CD8-positive, alpha-beta T cell (primary cell): ENCODE measurements at regions of chr10 and their contacts with region 1.

Region 1: DNA sequence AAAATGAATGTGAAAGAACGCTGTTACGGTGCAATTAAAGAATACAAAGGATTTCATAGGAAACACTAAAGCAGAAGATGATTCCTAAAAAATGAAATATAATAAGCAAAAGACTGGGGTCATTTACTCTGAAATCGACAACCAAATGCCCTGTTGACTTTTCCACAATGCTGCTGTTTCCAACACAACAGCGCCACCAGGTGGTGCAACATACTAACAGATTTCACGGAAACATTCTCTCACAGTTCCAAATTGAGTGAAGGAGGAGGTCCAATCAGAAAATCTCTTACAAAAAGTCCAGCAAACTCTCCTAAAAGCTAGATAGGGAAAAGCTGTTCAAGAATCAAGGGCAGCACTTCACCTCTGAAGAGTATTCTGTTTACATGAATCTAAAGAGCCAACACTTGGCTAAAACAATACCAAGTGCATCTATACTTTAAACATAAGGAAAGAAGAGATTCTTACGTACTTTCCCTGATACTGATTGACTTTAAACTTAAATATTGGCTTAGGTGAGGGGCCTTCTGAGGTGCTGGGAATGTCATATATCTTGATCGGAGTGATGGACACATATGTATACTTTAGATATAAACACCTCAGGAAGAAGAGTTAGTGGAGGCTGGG is 55.9 kb downstream of the UPF2 start:
- DNase-seq: peak; percentile 45 to 79 (median 68)
- ATAC-seq: peak; percentile 58
- H3K4me3 ChIP-seq: no peak overlapping the region
- H3K4me3 Mint-ChIP-seq: no peak overlapping the region
- H3K27ac ChIP-seq: no peak overlapping the region
- H3K27ac Mint-ChIP-seq: no peak overlapping the region
- H3K4me1 ChIP-seq: no peaks in the 10 kb centered on the region
- H3K4me1 Mint-ChIP-seq: peaks cover 6% of the 10 kb centered on the region
- H3K27me3 ChIP-seq: no peaks in the 10 kb centered on the region
- H3K27me3 Mint-ChIP-seq: no peaks in the 10 kb centered on the region
- CTCF ChIP-seq: peak; percentile 97

Region 2: GRCh38 chr10:11515596-11516430 is 470.9 kb before region 1 on chr10:
- CTCF ChIA-PET with region 1: no interaction called
- POLR2A ChIA-PET with region 1: no interaction called
- intact Hi-C with region 1: loop called (anchors 2 to 5 kb)
- DNase-seq: peak in 7 of 9 experiments; percentile 3 to 77 (median 45)
- ATAC-seq: peak; percentile 85
- H3K4me3 ChIP-seq: no peak overlapping the region
- H3K4me3 Mint-ChIP-seq: no peak overlapping the region
- H3K27ac ChIP-seq: no peak overlapping the region
- H3K27ac Mint-ChIP-seq: no peak overlapping the region
- H3K4me1 ChIP-seq: peaks cover 6% of the 10 kb centered on the region
- H3K4me1 Mint-ChIP-seq: peaks cover 4% of the 10 kb centered on the region
- H3K27me3 ChIP-seq: no peaks in the 10 kb centered on the region
- H3K27me3 Mint-ChIP-seq: no peaks in the 10 kb centered on the region
- CTCF ChIP-seq: peak; percentile 67

Region 3: GRCh38 chr10:11782793-11783557 is 203.7 kb before region 1 on chr10:
- CTCF ChIA-PET with region 1: interaction called, 38 read pairs
- POLR2A ChIA-PET with region 1: no interaction called
- intact Hi-C with region 1: loop called (anchors 1 kb)
- DNase-seq: peak in 2 of 9 experiments; percentile 50 to 62
- ATAC-seq: peak; percentile 71
- H3K4me3 ChIP-seq: no peak overlapping the region
- H3K4me3 Mint-ChIP-seq: no peak overlapping the region
- H3K27ac ChIP-seq: no peak overlapping the region
- H3K27ac Mint-ChIP-seq: no peak overlapping the region
- H3K4me1 ChIP-seq: no peaks in the 10 kb centered on the region
- H3K4me1 Mint-ChIP-seq: no peaks in the 10 kb centered on the region
- H3K27me3 ChIP-seq: no peaks in the 10 kb centered on the region
- H3K27me3 Mint-ChIP-seq: peaks cover 11% of the 10 kb centered on the region
- CTCF ChIP-seq: peak; percentile 63

Region 4: DNA sequence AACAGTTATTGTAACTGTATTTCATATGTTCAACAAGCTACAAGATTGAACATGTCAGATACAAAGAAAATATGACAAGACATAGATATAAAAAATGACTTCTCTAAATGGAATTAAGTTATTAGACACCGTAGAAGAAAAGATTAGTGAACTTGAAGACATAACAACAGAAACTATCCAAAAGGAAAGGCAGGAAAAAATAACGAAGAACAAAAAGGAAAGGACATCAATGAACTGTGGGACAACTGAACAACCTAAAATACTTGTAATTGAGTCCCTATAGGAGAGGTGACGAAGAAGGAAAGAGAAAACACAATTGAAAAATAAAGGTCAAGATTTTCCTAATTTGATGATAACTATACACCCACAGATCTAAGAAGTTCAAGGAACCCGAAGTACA is 23.6 kb after region 1 on chr10:
- CTCF ChIA-PET with region 1: interaction called, 10 read pairs
- POLR2A ChIA-PET with region 1: no interaction called
- intact Hi-C with region 1: no loop called
- DNase-seq: no peak
- ATAC-seq: no peak
- H3K4me3 ChIP-seq: no peak overlapping the region
- H3K4me3 Mint-ChIP-seq: no peak overlapping the region
- H3K27ac ChIP-seq: no peak overlapping the region
- H3K27ac Mint-ChIP-seq: no peak overlapping the region
- H3K4me1 ChIP-seq: no peaks in the 10 kb centered on the region
- H3K4me1 Mint-ChIP-seq: peaks cover 6% of the 10 kb centered on the region
- H3K27me3 ChIP-seq: no peaks in the 10 kb centered on the region
- H3K27me3 Mint-ChIP-seq: no peaks in the 10 kb centered on the region
- CTCF ChIP-seq: no peak

Region 5: DNA sequence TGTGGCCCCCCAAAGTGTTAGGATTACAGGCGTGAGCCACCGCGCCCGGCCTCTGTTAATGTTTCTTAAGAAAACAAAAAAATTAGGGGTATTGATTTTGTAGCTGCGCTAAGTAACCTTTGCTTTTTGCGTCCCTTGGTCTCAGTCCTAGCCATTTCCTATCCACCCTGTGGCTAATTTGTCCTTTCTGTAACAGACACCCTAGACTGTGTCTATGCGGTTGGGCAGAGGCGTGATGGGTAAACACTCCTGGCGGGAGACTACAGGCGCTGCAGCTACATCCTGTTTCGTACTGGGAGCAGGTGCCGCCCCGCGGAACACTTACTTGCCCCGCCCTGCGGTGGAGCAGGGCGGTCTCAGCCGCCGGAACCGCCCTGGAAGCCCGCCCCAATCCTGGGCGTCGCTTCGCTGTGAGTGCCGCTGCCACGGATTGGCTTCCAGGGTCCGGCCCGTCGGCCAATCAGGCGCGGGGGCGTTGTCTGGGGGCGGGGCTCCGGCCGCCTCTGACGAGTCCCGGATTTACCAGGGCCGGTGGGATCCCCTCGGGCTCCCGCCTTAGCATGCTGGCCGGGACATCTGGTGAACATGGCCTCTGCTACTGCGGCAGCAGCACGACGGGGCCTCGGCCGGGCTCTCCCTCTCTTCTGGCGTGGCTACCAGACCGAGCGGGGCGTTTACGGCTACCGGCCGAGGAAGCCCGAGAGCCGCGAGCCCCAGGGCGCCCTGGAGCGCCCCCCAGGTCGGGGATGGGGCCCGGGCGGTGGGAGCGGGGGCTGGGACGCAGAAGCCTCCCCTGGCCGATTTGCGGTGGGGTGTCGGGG is 82.0 kb after region 1 on chr10 and contains the start of gene DHTKD1:
- CTCF ChIA-PET with region 1: interaction called, 3 read pairs
- POLR2A ChIA-PET with region 1: no interaction called
- intact Hi-C with region 1: loop called in 1 of 2 experiments (anchors 1 kb)
- DNase-seq: peak; percentile 97 to 99 (median 98)
- ATAC-seq: peak; percentile 98
- H3K4me3 ChIP-seq: peak within 1 kb of the TSS; percentile 82 to 89
- H3K4me3 Mint-ChIP-seq: peak within 1 kb of the TSS; percentile 88
- H3K27ac ChIP-seq: peak within 1 kb of the TSS; percentile 66 to 75
- H3K27ac Mint-ChIP-seq: peak within 1 kb of the TSS; percentile 96
- H3K4me1 ChIP-seq: peaks cover 7% of the 10 kb centered on the region
- H3K4me1 Mint-ChIP-seq: peaks cover 19% of the 10 kb centered on the region
- H3K27me3 ChIP-seq: no peaks in the 10 kb centered on the region
- H3K27me3 Mint-ChIP-seq: no peaks in the 10 kb centered on the region
- CTCF ChIP-seq: peak; percentile 31
- total RNA-seq, gene DHTKD1: 6.6 TPM

Region 6: GRCh38 chr10:12540341-12540781 is 553.7 kb after region 1 on chr10:
- CTCF ChIA-PET with region 1: no interaction called
- POLR2A ChIA-PET with region 1: no interaction called
- intact Hi-C with region 1: no loop called
- DNase-seq: no peak
- ATAC-seq: no peak
- H3K4me3 ChIP-seq: no peak overlapping the region
- H3K4me3 Mint-ChIP-seq: no peak overlapping the region
- H3K27ac ChIP-seq: no peak overlapping the region
- H3K27ac Mint-ChIP-seq: no peak overlapping the region
- H3K4me1 ChIP-seq: no peaks in the 10 kb centered on the region
- H3K4me1 Mint-ChIP-seq: peaks cover 25% of the 10 kb centered on the region
- H3K27me3 ChIP-seq: no peaks in the 10 kb centered on the region
- H3K27me3 Mint-ChIP-seq: no peaks in the 10 kb centered on the region
- CTCF ChIP-seq: no peak